Activated naive CD4-positive, alpha-beta T cell treated with anti-CD3 and anti-CD28 coated beads for 36 hours (primary cell): ENCODE measurements at regions of chr11 and their contacts with region 1.

Region 1: DNA sequence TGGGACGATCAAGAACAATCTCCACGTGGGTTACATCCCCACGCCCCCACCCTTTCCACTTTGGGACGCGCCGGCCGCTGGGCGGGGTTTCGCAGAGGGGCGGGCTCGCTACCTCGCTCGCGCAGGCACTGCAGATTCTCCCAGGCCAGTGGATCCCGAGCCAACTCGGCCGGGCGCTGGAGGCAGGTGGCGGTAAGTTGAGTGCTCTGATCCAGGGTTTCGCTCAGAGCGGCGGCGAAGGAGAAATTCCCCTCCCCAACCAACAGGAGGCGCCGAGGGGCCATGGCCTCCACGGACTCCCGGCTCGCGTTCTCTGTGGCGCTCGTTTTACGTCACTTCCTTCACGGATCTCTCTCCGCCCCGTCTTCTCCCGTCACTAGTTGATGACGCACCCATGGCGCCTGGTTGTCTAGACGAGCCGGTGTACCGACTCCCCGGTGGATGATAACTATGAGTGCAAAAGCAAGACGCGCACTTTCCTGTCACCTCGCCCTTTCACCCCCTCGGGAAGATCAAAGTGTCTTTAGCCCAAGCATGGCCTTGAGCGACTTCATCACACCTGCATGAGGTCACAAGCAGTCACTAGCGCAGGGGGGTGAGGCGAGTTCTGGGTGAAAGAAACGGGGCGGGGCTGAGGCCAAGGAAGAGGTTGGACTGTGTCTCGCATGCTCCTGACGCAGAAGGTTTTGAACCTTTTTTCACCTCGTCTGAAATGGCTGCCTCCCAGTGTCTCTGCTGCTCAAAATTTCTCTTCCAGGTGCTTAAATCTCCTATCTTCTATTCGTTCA is at the starts of genes CFAP68 and FDXACB1:
- DNase-seq: peak; percentile 97
- H3K4me3 Mint-ChIP-seq: peak within 1 kb of the TSS; percentile 98
- H3K27ac Mint-ChIP-seq: peak within 1 kb of the TSS; percentile 97
- H3K4me1 Mint-ChIP-seq: peaks cover 39% of the 10 kb centered on the region
- H3K27me3 Mint-ChIP-seq: no peaks in the 10 kb centered on the region
- total RNA-seq, gene CFAP68: 31.5 to 33.2 TPM
- total RNA-seq, gene FDXACB1: 3.4 to 3.8 TPM

Region 2: GRCh38 chr11:111938687-111939160 is 59.7 kb after region 1 on chr11:
- CTCF ChIA-PET with region 1: interaction called, 4 read pairs
- intact Hi-C with region 1: loop called (anchors 2 kb)
- DNase-seq: peak; percentile 75
- H3K4me3 Mint-ChIP-seq: peak overlapping the region; percentile 76
- H3K27ac Mint-ChIP-seq: peak overlapping the region; percentile 84
- H3K4me1 Mint-ChIP-seq: peaks cover 43% of the 10 kb centered on the region
- H3K27me3 Mint-ChIP-seq: no peaks in the 10 kb centered on the region

Region 3: DNA sequence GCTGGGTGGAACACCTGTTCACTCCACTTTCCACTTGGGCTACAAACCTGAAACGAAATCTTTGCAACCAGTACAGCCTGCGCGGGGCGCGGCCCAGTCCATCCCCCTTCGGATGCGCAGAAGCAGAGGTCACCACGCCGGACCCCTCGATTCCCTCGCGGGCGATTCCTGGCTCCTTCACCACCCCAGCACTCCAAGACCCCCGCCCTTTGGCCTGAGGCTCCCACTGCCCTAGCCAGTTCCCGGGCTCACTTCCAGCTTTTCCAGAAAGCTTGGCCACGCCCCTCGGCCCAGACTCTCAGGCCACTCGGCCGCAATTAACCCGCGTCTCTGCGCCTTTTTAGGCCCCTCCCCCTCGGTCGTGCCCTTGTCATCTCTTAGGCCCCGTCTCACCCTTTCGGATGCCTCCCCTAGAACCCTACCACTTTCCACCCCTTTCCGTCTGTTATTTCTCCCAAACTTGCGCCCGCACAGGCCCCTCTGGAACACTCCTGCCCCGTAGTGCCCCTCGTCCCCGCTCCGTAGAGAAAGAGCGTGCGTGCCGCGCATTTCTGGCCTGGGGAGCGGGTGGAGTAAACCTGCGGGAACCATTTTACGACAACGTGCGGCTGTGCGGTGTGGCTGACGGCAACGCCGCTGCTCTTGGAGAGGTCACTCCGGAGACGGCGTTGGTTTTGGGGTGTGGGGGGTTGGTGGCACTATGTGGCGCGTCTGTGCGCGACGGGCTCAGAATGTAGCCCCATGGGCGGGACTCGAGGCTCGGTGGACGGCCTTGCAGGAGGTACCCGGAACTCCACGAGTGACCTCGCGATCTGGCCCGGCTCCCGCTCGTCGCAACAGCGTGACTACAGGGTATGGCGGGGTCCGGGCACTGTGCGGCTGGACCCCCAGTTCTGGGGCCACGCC is 146.0 kb after region 1 on chr11 and contains the start of gene DLAT:
- CTCF ChIA-PET with region 1: no interaction called
- intact Hi-C with region 1: loop called (anchors 1 kb)
- DNase-seq: peak; percentile 89
- H3K4me3 Mint-ChIP-seq: peak within 1 kb of the TSS; percentile 100
- H3K27ac Mint-ChIP-seq: peak within 1 kb of the TSS; percentile 100
- H3K4me1 Mint-ChIP-seq: peaks cover 28% of the 10 kb centered on the region
- H3K27me3 Mint-ChIP-seq: no peaks in the 10 kb centered on the region
- total RNA-seq, gene DLAT: 34.2 to 36.8 TPM

Region 4: GRCh38 chr11:112174789-112175598 is 296.0 kb after region 1 on chr11 and contains the start of gene BCO2:
- CTCF ChIA-PET with region 1: no interaction called
- intact Hi-C with region 1: loop called (anchors 1 kb)
- DNase-seq: peak; percentile 60
- H3K4me3 Mint-ChIP-seq: peak within 1 kb of the TSS; percentile 50
- H3K27ac Mint-ChIP-seq: no peak within 1 kb of the TSS
- H3K4me1 Mint-ChIP-seq: peaks cover 13% of the 10 kb centered on the region
- H3K27me3 Mint-ChIP-seq: peaks cover 22% of the 10 kb centered on the region
- total RNA-seq, gene BCO2: 0.30 to 0.45 TPM